ENCODE measurements at regions of chr15 and their contacts with region 1.

Region 1: GRCh38 chr15:57667171-57667849 is 39.2 kb upstream of the POLR2M start:
- DNase-seq: peak; percentile 50
- H3K4me3 ChIP-seq: no peak overlapping the region
- H3K27ac ChIP-seq: peak overlapping the region; percentile 6
- H3K4me1 ChIP-seq: peaks cover 18% of the 10 kb centered on the region
- H3K27me3 ChIP-seq: no peaks in the 10 kb centered on the region
- CTCF ChIP-seq: peak; percentile 47 to 64

Region 2: DNA sequence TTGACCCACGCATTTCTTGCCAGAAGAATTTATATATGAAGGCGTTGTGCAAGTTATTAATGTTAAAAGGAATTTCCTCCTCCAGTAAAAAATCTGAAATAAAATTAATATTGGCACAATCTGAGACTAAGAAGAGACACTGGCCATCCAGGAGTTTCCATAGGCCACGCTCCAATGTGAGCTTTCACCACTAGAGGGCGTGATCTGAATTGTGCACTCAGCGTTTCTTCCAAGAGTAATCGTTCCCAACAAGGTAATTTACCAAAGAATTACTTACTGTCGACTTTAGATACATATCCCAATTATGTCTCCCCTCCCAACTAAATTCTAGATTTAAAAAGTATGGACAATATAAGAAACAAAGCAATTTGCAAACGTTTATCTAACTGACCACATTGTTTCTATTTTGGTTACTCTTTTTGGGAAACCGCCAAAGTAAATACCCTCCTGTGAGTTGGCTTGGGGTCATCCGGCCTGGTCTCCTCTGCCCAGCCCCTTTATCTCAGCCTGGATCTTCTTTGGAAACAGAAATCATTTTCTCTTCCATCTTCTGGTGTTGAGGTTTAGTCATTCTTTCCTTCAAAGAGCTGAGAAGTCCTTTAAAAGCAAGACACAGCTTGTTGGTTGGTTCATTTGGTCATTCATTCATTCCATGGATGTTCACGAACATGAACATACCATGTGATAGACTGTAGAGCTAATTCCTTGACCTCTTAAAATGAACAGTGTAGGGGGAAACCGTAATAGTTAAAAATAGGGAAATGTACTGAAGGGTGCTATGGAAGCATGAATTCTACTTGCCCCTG is 65.4 kb after region 1 on chr15:
- CTCF ChIA-PET with region 1: interaction called, 3 read pairs
- dilution Hi-C with region 1: no loop called
- in situ Hi-C with region 1: no loop called
- intact Hi-C with region 1: loop called (anchors 2 kb)
- DNase-seq: peak; percentile 45
- H3K4me3 ChIP-seq: no peak overlapping the region
- H3K27ac ChIP-seq: no peak overlapping the region
- H3K4me1 ChIP-seq: peaks cover 21% of the 10 kb centered on the region
- H3K27me3 ChIP-seq: no peaks in the 10 kb centered on the region
- CTCF ChIP-seq: peak; percentile 86 to 96

Region 3: GRCh38 chr15:57861036-57861638 is 193.8 kb after region 1 on chr15:
- CTCF ChIA-PET with region 1: no interaction called
- dilution Hi-C with region 1: no loop called
- in situ Hi-C with region 1: no loop called
- intact Hi-C with region 1: loop called (anchors 1 kb)
- DNase-seq: peak; percentile 61
- H3K4me3 ChIP-seq: no peak overlapping the region
- H3K27ac ChIP-seq: no peak overlapping the region
- H3K4me1 ChIP-seq: peaks cover 8% of the 10 kb centered on the region
- H3K27me3 ChIP-seq: no peaks in the 10 kb centered on the region
- CTCF ChIP-seq: peak; percentile 66 to 75